ENCODE measurements at regions of chr12 and their contacts with region 1.

Region 1: DNA sequence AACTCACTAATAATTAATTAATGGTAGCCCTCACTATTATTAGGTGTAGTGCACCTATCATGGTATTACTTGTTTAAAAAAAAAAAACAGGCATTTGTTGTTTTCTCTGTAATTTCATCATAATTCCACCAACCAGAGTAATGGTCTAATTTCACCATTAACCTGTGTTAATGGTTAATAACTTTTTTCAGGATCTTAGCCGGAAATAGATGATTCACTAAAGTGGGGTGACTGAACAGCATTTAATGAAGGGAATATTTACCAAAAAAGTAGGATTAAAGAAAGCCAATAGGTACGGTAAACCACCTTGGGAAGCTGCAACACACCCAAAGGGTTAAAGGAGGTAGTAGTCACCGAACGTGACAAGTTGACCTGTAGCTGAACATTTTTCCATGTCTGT is 13.0 kb downstream of the ETFBKMT start:
- DNase-seq: no peak
- ATAC-seq: no peak
- H3K4me3 ChIP-seq: no peak overlapping the region
- H3K27ac ChIP-seq: no peak overlapping the region
- H3K4me1 ChIP-seq: no peaks in the 10 kb centered on the region
- H3K27me3 ChIP-seq: no peaks in the 10 kb centered on the region
- CTCF ChIP-seq: no peak

Region 2: DNA sequence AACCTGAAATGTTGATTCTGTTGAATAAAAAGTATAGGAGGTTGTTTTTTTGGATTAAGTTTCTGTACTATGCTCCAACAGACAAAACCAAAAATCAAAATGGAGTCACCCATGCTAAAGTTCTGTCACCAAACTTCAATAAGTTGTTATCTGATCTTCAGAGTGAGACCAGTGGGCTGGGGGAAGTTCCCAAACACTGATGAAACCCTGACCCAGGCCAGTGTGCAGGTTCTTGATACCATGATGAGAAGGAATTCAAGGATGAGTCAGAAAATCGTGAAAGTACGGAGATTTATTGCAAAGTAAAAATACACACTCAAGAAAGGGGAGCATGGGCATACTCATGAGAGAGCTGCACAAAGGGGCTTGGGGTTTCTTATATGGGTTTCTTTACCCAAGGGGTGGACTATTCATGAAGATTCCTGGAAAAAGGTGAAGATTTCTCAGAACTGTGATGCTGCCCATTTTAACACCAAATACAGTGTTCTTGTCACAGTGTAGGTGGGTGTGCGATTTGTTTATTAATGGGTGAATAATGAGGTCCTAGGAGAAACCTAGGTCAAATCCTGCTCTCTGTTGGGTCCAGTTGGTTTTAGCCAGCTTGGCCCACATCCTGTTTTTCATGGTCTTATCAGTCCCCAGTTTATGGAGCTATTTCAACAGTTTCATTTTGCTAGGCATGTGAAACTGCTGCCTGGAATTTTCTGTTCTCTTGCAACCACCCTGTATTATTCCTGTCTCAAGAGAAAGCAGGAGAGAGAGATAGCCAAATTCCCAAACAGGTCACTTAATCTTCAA is 54.1 kb before region 1 on chr12:
- CTCF ChIA-PET with region 1: no interaction called
- POLR2A ChIA-PET with region 1: no interaction called
- intact Hi-C with region 1: no loop called
- DNase-seq: no peak
- ATAC-seq: no peak
- H3K4me3 ChIP-seq: no peak overlapping the region
- H3K27ac ChIP-seq: no peak overlapping the region
- H3K4me1 ChIP-seq: no peaks in the 10 kb centered on the region
- H3K27me3 ChIP-seq: no peaks in the 10 kb centered on the region
- CTCF ChIP-seq: no peak

Region 3: GRCh38 chr12:32312049-32312670 is 639.6 kb after region 1 on chr12:
- CTCF ChIA-PET with region 1: no interaction called
- POLR2A ChIA-PET with region 1: no interaction called
- intact Hi-C with region 1: loop called (anchors 5 kb)
- DNase-seq: peak; percentile 68
- ATAC-seq: peak; percentile 51
- H3K4me3 ChIP-seq: no peak overlapping the region
- H3K27ac ChIP-seq: no peak overlapping the region
- H3K4me1 ChIP-seq: no peaks in the 10 kb centered on the region
- H3K27me3 ChIP-seq: no peaks in the 10 kb centered on the region
- CTCF ChIP-seq: peak; percentile 79

Measured in PC-3 (cell line).